ENCODE measurements at regions of chr1 and their contacts with region 1.

Region 1: DNA sequence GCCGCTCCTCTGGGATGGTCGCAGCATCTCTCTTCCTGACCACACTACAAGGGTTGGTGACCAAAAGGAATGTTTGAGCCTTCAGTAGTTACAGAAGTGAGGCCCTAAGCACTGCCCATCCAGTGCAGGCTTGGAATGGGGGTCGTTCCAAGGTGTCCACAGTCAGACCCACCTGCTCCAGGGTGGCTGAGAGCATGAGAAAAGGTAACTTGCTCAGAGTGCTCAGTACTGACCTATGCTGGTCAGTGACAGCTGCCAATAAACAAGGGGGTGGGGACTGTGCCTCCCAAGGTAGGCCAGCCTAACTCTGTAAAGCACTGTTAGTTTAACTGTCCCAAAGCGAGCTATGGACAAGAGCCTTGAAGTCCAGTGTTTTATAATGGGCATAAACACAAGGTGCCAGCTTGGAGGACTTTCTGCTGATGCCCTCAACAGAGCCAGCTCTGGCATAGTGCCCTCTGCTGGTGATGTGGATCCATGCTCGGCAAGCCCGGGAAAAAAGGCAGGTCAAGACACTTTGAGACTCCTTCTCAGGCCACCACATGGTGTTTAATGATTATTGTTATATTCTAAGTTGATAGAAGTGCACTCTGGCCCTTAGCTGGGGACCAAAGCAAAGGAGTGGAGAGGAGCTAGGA is 78.1 kb upstream of the DNAH14 start:
- DNase-seq: peak; percentile 73
- H3K4me3 ChIP-seq: no peak overlapping the region
- H3K27ac ChIP-seq: no peak overlapping the region
- H3K4me1 ChIP-seq: no peaks in the 10 kb centered on the region
- H3K27me3 ChIP-seq: no peaks in the 10 kb centered on the region
- CTCF ChIP-seq: peak; percentile 69

Region 2: DNA sequence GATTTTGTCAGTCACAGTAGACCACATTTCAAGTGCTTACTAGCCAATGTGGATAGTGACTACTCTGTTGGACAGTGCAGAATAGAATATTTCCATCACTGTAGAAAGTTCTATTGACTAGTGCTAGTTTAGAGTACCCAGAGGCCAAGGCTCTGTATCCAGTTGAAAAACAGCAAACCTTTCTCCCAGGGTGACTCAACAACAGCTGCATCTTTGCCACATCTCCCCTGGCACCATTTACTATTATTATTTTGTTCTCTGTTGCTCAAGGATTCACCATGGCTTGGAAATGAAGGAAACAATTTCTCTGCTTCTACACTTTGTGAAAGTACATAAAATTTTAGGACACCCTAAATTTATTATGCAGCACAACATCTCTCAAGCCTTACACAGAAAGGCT is 331.5 kb before region 1 on chr1:
- intact Hi-C with region 1: loop called (anchors 5 kb)
- DNase-seq: no peak
- H3K4me3 ChIP-seq: no peak overlapping the region
- H3K27ac ChIP-seq: no peak overlapping the region
- H3K4me1 ChIP-seq: no peaks in the 10 kb centered on the region
- H3K27me3 ChIP-seq: no peaks in the 10 kb centered on the region
- CTCF ChIP-seq: no peak

Region 3: GRCh38 chr1:224650290-224650689 is 201.0 kb before region 1 on chr1:
- intact Hi-C with region 1: no loop called
- DNase-seq: no peak
- H3K4me3 ChIP-seq: no peak overlapping the region
- H3K27ac ChIP-seq: no peak overlapping the region
- H3K4me1 ChIP-seq: no peaks in the 10 kb centered on the region
- H3K27me3 ChIP-seq: no peaks in the 10 kb centered on the region
- CTCF ChIP-seq: no peak

Region 4: GRCh38 chr1:224753491-224753890 is 97.8 kb before region 1 on chr1:
- intact Hi-C with region 1: no loop called
- DNase-seq: no peak
- H3K4me3 ChIP-seq: no peak overlapping the region
- H3K27ac ChIP-seq: no peak overlapping the region
- H3K4me1 ChIP-seq: no peaks in the 10 kb centered on the region
- H3K27me3 ChIP-seq: no peaks in the 10 kb centered on the region
- CTCF ChIP-seq: no peak

Region 5: GRCh38 chr1:224922404-224923164 is 71.3 kb after region 1 on chr1:
- intact Hi-C with region 1: loop called (anchors 10 kb)
- DNase-seq: no peak
- H3K4me3 ChIP-seq: no peak overlapping the region
- H3K27ac ChIP-seq: no peak overlapping the region
- H3K4me1 ChIP-seq: no peaks in the 10 kb centered on the region
- H3K27me3 ChIP-seq: no peaks in the 10 kb centered on the region
- CTCF ChIP-seq: peak; percentile 57